Dorsolateral prefrontal cortex (tissue), 120 donors: ENCODE measurements at regions of chr12 and their contacts with region 1.

Region 1: DNA sequence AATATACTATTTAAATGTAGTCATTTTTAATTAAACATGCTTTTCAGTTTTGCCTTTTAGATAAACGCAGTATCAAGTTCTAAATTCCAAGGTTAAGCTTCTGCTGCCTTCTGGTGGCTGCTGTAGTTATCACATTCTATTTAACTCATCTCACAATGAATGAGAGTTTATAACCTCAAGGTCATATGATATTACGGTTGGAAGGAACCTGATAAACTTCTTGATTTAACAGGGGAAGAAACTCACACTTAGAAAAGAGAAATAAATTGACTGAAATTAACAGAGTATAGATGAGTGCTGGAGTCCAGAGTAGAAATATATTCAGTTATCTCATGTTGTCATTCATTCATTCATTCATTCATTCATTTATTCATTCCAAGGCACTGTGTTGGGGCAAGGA is 31.9 kb downstream of the GUCY2C start:
- DNase-seq: peak in 2 of 10 donors; percentile 9 to 21
- H3K4me3 ChIP-seq: no peak overlapping the region
- H3K27ac ChIP-seq: no peak overlapping the region
- H3K27me3 ChIP-seq: no peaks in the 10 kb centered on the region
- CTCF ChIP-seq: peak; percentile 31 to 82 (median 65)

Region 2: DNA sequence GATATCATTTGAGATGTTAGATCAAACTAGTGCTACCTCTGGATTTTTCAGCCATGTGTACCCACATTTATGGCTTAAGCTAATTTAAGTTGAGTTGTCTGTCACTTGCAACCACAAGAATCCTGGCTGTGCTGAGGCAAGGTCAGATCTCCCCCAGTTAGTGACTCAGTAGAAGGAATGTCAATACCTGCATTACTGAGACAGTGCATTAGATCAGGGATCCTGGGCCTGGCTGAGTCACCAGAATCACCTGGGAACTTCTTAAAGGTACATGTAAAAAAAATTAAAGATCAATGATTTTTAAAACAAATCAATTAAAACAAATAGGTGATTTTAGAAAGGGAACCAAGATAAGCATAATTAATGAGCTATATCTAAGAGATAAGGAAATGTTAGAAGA is 598.5 kb before region 1 on chr12:
- intact Hi-C with region 1: no loop called
- DNase-seq: no peak
- H3K4me3 ChIP-seq: no peak overlapping the region
- H3K27ac ChIP-seq: no peak overlapping the region
- H3K27me3 ChIP-seq: no peaks in the 10 kb centered on the region
- CTCF ChIP-seq: no peak

Region 3: GRCh38 chr12:14567351-14568162 is 97.0 kb before region 1 on chr12 and contains the start of gene PLBD1:
- intact Hi-C with region 1: no loop called
- DNase-seq: peak in 6 of 10 donors; percentile 18 to 64 (median 44)
- H3K4me3 ChIP-seq: peak within 1 kb of the TSS; percentile 14 to 72 (median 58)
- H3K27ac ChIP-seq: peak within 1 kb of the TSS in 11 of 59 donors; percentile 1 to 75 (median 39)
- H3K27me3 ChIP-seq: peaks cover 0 to 28% (median 0%) of the 10 kb centered on the region in 45 donors
- CTCF ChIP-seq: peak in 1 of 56 donors; percentile 23
- total RNA-seq, gene PLBD1: 0.26 to 8.7 (median 1.9) TPM

Region 4: GRCh38 chr12:14629832-14630710 is 34.4 kb before region 1 on chr12:
- intact Hi-C with region 1: loop called in 1 of 2 experiments (anchors 5 kb)
- DNase-seq: peak in 9 of 10 donors; percentile 52 to 80 (median 63)
- H3K4me3 ChIP-seq: no peak overlapping the region
- H3K27ac ChIP-seq: no peak overlapping the region
- H3K27me3 ChIP-seq: no peaks in the 10 kb centered on the region
- CTCF ChIP-seq: peak; percentile 41 to 96 (median 83)

Region 5: GRCh38 chr12:14901228-14901562 is 236.7 kb after region 1 on chr12:
- intact Hi-C with region 1: no loop called
- DNase-seq: no peak
- H3K4me3 ChIP-seq: no peak overlapping the region
- H3K27ac ChIP-seq: no peak overlapping the region
- H3K27me3 ChIP-seq: no peaks in the 10 kb centered on the region
- CTCF ChIP-seq: no peak